ENCODE measurements at regions of chr17 and their contacts with region 1.

Region 1: GRCh38 chr17:49952209-49952911 is 16.6 kb upstream of the DLX4 start:
- DNase-seq: peak; percentile 63 to 87 (median 82)
- ATAC-seq: peak; percentile 98
- H3K4me3 ChIP-seq: no peak overlapping the region
- H3K4me3 Mint-ChIP-seq: no peak overlapping the region
- H3K27ac ChIP-seq: no peak overlapping the region
- H3K27ac Mint-ChIP-seq: no peak overlapping the region
- H3K4me1 ChIP-seq: no peaks in the 10 kb centered on the region
- H3K4me1 Mint-ChIP-seq: no peaks in the 10 kb centered on the region
- H3K27me3 ChIP-seq: no peaks in the 10 kb centered on the region
- H3K27me3 Mint-ChIP-seq: peaks cover 42% of the 10 kb centered on the region
- CTCF ChIP-seq: peak; percentile 71

Region 2: DNA sequence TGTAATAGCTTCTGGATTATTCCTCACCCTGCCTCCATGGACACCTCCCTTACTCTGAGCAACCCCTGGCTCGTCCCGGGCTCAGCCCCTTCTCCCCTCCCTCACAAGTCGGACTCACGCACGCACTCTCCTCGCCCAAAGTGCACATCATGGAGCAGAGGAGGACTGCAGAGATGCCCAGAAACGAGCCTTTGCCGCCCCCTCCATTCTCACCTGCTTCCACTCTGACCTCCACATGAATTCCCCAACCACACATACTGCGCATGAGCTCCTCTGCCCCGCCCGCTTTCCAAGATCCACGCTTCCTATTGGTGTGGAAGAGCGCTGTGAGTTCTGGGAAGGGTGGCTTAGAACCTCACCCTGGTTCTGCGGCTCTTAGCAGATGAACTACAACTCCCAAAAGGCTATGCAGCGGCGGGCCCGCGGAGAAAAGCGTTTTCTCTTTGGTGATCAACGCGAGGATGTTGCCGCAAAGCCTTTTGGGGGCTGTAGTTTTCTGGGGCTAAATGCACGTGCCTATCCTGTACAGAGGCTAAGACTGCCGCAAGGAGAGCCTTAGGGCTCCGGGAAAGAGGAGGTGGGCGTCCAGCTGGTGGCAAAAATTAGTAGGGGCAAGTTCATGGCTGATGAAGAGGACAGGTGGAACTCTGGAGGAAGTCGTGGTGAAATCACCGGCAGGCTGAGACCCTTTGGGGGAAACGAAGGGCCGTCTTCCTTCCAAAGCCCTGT is 537.6 kb before region 1 on chr17 and contains the start of gene PHB1:
- CTCF ChIA-PET with region 1: no interaction called
- POLR2A ChIA-PET with region 1: no interaction called
- intact Hi-C with region 1: no loop called
- DNase-seq: peak; percentile 86 to 98 (median 94)
- ATAC-seq: peak; percentile 98
- H3K4me3 ChIP-seq: peak within 1 kb of the TSS; percentile 80 to 96
- H3K4me3 Mint-ChIP-seq: peak within 1 kb of the TSS; percentile 99
- H3K27ac ChIP-seq: peak within 1 kb of the TSS; percentile 43 to 61
- H3K27ac Mint-ChIP-seq: peak within 1 kb of the TSS; percentile 93
- H3K4me1 ChIP-seq: peaks cover 12% of the 10 kb centered on the region
- H3K4me1 Mint-ChIP-seq: peaks cover 31% of the 10 kb centered on the region
- H3K27me3 ChIP-seq: no peaks in the 10 kb centered on the region
- H3K27me3 Mint-ChIP-seq: no peaks in the 10 kb centered on the region
- CTCF ChIP-seq: no peak
- total RNA-seq, gene PHB1: 26.3 to 27.0 TPM

Region 3: DNA sequence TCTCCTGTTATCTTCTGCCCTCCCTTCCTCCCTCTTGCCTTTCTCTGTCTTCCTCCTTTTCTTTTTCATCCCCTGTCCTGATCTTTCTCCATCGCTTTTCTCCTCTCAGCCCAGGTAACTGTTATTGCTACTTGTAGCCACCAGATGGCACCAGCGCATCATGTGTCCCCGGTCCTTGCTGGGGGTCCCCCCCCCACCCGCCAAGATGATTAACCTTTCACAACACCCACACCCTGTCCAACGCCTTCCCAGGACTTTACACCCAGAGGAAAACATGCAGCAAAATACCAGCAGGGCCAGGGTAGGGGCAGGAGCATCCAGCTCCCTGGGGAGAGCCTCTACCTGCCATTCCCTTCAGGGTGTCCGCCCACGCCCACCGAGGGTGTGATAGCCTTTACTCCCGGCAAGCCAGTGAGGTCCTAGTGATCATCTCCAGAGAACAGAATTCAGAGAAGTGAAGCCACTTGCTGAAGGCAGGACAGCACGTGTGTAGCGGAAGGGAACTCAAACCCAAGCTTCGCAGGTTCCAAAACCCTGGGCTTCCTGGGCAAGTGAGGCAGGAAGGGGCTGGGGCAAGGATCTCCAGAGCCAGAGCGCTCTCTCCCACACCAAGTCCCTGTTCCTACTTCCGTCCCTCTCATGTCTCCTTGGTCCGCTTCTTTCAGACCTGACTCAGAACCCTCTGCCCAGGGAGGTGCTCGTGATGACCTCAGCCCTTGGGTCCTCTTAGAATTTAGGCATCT is 91.0 kb before region 1 on chr17:
- CTCF ChIA-PET with region 1: interaction called, 7 read pairs
- POLR2A ChIA-PET with region 1: no interaction called
- intact Hi-C with region 1: loop called (anchors 1 to 5 kb)
- DNase-seq: peak; percentile 14 to 81 (median 66)
- ATAC-seq: peak; percentile 90
- H3K4me3 ChIP-seq: no peak overlapping the region
- H3K4me3 Mint-ChIP-seq: no peak overlapping the region
- H3K27ac ChIP-seq: no peak overlapping the region
- H3K27ac Mint-ChIP-seq: no peak overlapping the region
- H3K4me1 ChIP-seq: no peaks in the 10 kb centered on the region
- H3K4me1 Mint-ChIP-seq: peaks cover 4% of the 10 kb centered on the region
- H3K27me3 ChIP-seq: peaks cover 0 to 3% of the 10 kb centered on the region in 2 experiments
- H3K27me3 Mint-ChIP-seq: peaks cover 11% of the 10 kb centered on the region
- CTCF ChIP-seq: peak; percentile 93

Region 4: DNA sequence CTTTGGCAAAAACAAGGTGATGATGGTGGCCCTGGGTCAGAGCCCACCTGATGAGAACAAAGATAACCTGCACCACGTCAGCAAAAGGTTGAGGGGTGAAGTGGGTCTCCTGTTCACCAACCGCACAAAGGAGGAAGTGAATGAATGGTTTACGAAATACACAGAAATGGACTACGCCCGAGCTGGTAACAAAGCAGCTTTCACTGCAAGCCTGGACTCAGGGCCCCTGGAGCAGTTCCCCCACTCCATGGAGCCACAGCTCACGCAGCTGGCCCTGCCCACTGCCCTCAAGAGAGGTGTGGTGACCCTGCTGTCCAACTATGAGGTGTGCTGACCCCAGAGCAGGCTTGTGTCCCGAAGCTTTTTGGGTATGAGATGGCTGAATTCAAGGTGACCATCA is 13.0 kb before region 1 on chr17:
- CTCF ChIA-PET with region 1: interaction called, 36 read pairs
- POLR2A ChIA-PET with region 1: no interaction called
- intact Hi-C with region 1: no loop called
- DNase-seq: no peak
- ATAC-seq: no peak
- H3K4me3 ChIP-seq: no peak overlapping the region
- H3K4me3 Mint-ChIP-seq: no peak overlapping the region
- H3K27ac ChIP-seq: no peak overlapping the region
- H3K27ac Mint-ChIP-seq: no peak overlapping the region
- H3K4me1 ChIP-seq: no peaks in the 10 kb centered on the region
- H3K4me1 Mint-ChIP-seq: no peaks in the 10 kb centered on the region
- H3K27me3 ChIP-seq: peaks cover 0 to 4% of the 10 kb centered on the region in 2 experiments
- H3K27me3 Mint-ChIP-seq: peaks cover 40% of the 10 kb centered on the region
- CTCF ChIP-seq: no peak

Region 5: DNA sequence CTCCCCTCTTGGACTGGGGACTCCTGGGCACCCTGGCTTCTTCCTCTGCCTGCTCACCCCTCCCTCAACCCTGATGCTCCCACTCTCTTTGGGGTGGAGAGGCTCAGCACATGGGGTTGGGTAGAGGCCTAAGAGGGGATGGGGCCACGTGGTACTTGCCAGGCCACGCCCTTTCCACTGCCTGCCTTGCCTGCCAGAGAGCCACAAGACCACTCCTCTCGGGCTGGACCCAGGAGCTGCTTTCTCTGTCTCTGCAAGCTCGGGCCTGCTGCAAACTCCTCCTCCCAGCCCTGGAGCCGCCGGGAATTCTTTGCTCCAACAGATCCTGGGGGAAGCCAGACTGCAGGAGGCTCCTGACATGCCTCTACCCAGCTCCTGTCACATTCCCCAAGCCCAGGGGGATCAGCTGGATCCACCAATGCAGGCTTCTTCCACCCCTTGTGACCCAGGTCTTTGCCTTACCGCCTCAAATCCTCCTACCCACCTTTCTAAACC is 28.4 kb after region 1 on chr17:
- CTCF ChIA-PET with region 1: interaction called, 35 read pairs
- POLR2A ChIA-PET with region 1: no interaction called
- intact Hi-C with region 1: no loop called
- DNase-seq: no peak
- ATAC-seq: no peak
- H3K4me3 ChIP-seq: no peak overlapping the region
- H3K4me3 Mint-ChIP-seq: no peak overlapping the region
- H3K27ac ChIP-seq: no peak overlapping the region
- H3K27ac Mint-ChIP-seq: no peak overlapping the region
- H3K4me1 ChIP-seq: no peaks in the 10 kb centered on the region
- H3K4me1 Mint-ChIP-seq: no peaks in the 10 kb centered on the region
- H3K27me3 ChIP-seq: no peaks in the 10 kb centered on the region
- H3K27me3 Mint-ChIP-seq: peaks cover 43% of the 10 kb centered on the region
- CTCF ChIP-seq: no peak

Region 6: GRCh38 chr17:49987681-49988441 is 35.5 kb after region 1 on chr17:
- CTCF ChIA-PET with region 1: interaction called, 255 read pairs
- POLR2A ChIA-PET with region 1: no interaction called
- intact Hi-C with region 1: no loop called
- DNase-seq: peak in 1 of 9 experiments; percentile 29
- ATAC-seq: no peak
- H3K4me3 ChIP-seq: no peak overlapping the region
- H3K4me3 Mint-ChIP-seq: no peak overlapping the region
- H3K27ac ChIP-seq: no peak overlapping the region
- H3K27ac Mint-ChIP-seq: no peak overlapping the region
- H3K4me1 ChIP-seq: peaks cover under 1% of the 10 kb centered on the region
- H3K4me1 Mint-ChIP-seq: peaks cover 4% of the 10 kb centered on the region
- H3K27me3 ChIP-seq: peaks cover 3 to 15% of the 10 kb centered on the region in 2 experiments
- H3K27me3 Mint-ChIP-seq: peaks cover 51% of the 10 kb centered on the region
- CTCF ChIP-seq: no peak

Region 7: GRCh38 chr17:50099003-50099402 is 146.6 kb after region 1 on chr17:
- CTCF ChIA-PET with region 1: no interaction called
- POLR2A ChIA-PET with region 1: no interaction called
- intact Hi-C with region 1: no loop called
- DNase-seq: no peak
- ATAC-seq: no peak
- H3K4me3 ChIP-seq: no peak overlapping the region
- H3K4me3 Mint-ChIP-seq: no peak overlapping the region
- H3K27ac ChIP-seq: no peak overlapping the region
- H3K27ac Mint-ChIP-seq: no peak overlapping the region
- H3K4me1 ChIP-seq: peaks cover 15% of the 10 kb centered on the region
- H3K4me1 Mint-ChIP-seq: peaks cover 42% of the 10 kb centered on the region
- H3K27me3 ChIP-seq: no peaks in the 10 kb centered on the region
- H3K27me3 Mint-ChIP-seq: no peaks in the 10 kb centered on the region
- CTCF ChIP-seq: no peak

Region 8: DNA sequence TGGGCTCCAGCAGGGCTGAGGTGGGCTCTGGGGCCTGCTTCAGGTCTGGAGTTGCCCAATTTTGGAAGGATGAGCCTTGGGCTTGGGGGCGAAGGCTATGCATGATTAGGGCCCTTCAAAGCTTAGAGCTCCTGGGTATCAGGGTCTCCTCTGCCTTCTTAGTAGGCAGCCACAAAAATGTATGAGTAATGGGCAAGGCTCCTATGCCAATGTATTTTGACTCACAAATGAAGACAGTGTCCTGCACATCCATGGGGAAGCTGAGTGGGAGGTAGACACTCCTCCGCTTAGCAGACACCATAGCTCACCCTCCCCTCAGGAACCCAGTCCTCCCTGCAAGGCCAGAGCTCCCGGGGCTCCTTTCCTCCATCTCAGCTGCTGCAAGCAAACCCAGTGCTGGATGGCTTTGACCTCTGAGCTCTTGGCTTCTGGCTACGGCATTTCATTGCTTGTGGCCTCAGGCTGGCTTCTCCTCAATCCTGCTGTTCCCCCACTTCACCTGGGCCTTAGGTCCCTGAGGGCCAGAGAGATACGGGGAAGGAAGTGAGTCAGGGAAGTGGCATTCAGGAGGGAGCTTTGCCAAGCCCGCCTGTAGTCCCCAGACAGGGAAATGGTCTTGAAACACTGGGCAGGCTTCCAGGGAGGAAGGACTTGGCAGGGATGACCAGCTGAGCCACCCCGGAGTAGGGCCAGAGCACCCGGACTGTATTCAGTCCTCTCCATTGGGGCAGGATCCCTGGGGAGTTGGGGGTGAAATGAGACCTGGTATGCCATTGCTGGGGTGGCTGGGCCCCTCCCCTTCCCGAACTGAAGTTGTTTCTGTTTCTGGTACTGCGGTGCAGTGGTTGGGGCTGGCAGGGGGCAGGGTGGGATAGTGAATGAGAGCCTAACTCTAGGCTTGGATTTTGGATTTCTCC is 686.7 kb after region 1 on chr17:
- CTCF ChIA-PET with region 1: no interaction called
- POLR2A ChIA-PET with region 1: no interaction called
- intact Hi-C with region 1: no loop called
- DNase-seq: no peak
- ATAC-seq: no peak
- H3K4me3 ChIP-seq: no peak overlapping the region
- H3K4me3 Mint-ChIP-seq: no peak overlapping the region
- H3K27ac ChIP-seq: no peak overlapping the region
- H3K27ac Mint-ChIP-seq: no peak overlapping the region
- H3K4me1 ChIP-seq: peaks cover 5% of the 10 kb centered on the region
- H3K4me1 Mint-ChIP-seq: no peaks in the 10 kb centered on the region
- H3K27me3 ChIP-seq: peaks cover 0 to 15% of the 10 kb centered on the region in 2 experiments
- H3K27me3 Mint-ChIP-seq: peaks cover 37% of the 10 kb centered on the region
- CTCF ChIP-seq: no peak

Measured in CD8-positive, alpha-beta T cell (primary cell).